ENCODE measurements at regions of chr6 and their contacts with region 1.

Region 1: DNA sequence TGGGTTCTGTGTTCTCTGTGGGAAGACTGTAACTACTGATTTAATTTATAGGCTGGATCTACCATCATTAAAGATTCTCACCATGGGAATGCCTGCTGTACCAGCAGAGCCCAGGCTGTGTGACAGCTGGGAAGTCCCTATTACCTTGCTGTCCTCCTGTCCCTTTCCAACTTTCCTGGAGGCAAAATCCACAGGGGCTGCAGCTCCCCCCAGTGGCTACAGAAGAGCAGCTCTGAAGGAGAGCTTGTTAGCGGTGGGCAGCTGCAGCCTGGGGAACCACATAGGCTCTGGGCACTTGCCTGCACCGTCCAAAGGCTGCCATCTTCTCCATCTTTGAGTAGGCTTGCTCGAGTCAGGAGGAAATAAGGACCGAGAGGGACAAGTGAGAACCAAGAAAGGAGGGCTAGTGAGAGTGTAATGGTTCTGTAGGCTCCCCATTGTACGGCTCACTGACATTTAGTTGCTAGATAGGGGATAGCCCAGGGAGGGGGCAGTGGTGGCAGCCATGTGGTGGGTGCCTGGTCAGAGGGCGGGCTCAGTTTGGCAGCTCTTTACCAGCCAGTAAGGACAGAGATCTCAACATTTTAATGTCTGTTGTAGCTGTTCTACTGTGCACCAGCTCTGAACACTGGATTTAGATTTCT is 155.1 kb upstream of the MLIP start:
- DNase-seq: peak; percentile 89 to 91
- H3K4me3 ChIP-seq: no peak overlapping the region
- H3K4me1 ChIP-seq: peaks cover 12% of the 10 kb centered on the region
- H3K27me3 ChIP-seq: no peaks in the 10 kb centered on the region; the same call in 1 of the 2 replicates

Region 2: GRCh38 chr6:53544470-53545308 is 411.5 kb before region 1 on chr6 and contains the start of gene GCLC:
- in situ Hi-C with region 1: no loop called
- DNase-seq: peak; percentile 93 to 96
- H3K4me3 ChIP-seq: peak within 1 kb of the TSS; percentile 72
- H3K4me1 ChIP-seq: peaks cover 37% of the 10 kb centered on the region
- H3K27me3 ChIP-seq: no peaks in the 10 kb centered on the region

Region 3: DNA sequence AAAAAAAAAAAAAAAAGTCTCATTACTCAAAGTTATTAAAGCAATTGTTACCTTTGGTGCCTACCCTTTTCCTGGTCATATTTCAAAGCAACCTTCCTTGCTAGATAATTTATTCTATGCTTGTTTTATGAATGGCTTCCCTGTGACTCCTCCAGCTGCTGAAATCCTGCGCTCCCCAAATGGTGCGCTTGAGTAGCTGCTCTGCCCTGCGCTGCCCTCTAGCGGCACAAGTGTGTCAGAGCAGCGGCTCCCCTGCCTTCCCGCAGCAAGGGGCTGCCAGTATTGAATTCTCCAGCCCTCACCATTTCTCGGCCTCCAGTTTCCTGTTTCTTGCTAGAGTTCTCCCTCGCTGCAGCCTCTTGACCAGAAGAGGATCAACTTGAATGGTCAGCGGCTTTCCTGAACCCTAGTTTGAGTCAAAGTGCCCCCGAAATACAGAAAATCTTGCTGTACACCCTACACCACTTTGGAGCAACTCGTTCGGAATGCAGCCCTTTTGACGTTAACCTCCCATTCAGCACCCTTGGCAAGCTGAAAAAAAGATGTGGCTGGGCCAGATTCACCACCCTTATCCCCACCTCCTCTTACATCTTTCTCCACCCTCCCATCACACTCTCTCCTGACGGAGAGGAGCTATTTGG is 230.3 kb before region 1 on chr6:
- in situ Hi-C with region 1: no loop called
- DNase-seq: peak; percentile 68 to 88
- H3K4me3 ChIP-seq: no peak overlapping the region
- H3K4me1 ChIP-seq: peaks cover 14% of the 10 kb centered on the region
- H3K27me3 ChIP-seq: no peaks in the 10 kb centered on the region

Region 4: GRCh38 chr6:53741034-53741823 is 215.0 kb before region 1 on chr6:
- in situ Hi-C with region 1: loop called (anchors 10 kb)
- DNase-seq: no peak
- H3K4me3 ChIP-seq: no peak overlapping the region
- H3K4me1 ChIP-seq: peaks cover 11% of the 10 kb centered on the region
- H3K27me3 ChIP-seq: no peaks in the 10 kb centered on the region

Region 5: GRCh38 chr6:53794720-53795253 is 161.4 kb before region 1 on chr6 and contains the start of gene LRRC1:
- in situ Hi-C with region 1: loop called (anchors 5 kb)
- DNase-seq: peak; percentile 88 to 96
- H3K4me3 ChIP-seq: peak within 1 kb of the TSS; percentile 70
- H3K4me1 ChIP-seq: peaks cover 30% of the 10 kb centered on the region
- H3K27me3 ChIP-seq: no peaks in the 10 kb centered on the region

Measured in HAP-1 (cell line).